Caco-2 (cell line): ENCODE measurements at regions of chr9 and their contacts with region 1.

Region 1: DNA sequence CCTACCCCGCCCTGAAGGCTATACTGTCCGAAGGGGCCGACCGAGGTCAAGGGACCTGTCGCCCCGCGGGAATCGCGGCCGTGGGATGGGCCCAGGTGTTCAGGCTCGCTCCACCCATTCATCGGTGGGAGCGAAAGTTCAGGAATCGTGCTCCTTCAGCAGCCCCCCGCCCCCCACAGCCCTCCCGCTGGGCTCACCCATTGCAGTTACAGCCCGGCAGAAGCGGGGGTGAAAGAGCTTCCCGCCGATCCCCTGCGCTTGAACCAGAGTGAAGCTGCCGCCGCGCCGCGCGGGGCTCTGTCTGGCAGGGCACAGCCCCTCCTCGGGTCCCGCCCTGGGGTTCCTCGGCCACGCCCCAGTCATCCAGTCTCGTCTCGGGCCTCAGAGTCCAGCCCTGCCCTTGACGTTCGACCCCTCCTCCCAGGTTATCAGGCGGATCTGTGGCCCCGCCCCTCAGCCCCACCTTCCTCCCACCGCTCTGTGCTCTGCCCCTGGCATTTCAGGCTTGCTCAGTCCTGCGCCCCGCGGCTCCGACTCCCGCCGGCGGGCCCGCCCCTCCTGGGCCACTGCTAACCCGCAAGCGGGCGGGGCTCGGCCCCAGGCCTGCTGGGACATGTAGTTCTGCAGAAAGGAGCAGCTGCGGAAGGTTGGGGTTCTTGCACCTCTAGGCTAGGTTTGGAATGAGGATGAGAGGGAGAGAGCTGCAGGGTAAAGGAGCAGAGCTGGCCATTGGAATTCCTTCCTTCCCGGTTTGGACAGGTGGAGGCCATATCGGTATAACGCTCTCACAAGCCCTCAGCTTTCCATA is at the start of gene MYORG:
- DNase-seq: peak; percentile 99
- H3K4me3 ChIP-seq: peak within 1 kb of the TSS; percentile 89
- H3K4me3 Mint-ChIP-seq: peak within 1 kb of the TSS; percentile 88
- H3K27ac Mint-ChIP-seq: peak within 1 kb of the TSS; percentile 49
- H3K4me1 ChIP-seq: peaks cover 29% of the 10 kb centered on the region
- H3K4me1 Mint-ChIP-seq: peaks cover 26% of the 10 kb centered on the region
- H3K27me3 ChIP-seq: no peaks in the 10 kb centered on the region
- H3K27me3 Mint-ChIP-seq: no peaks in the 10 kb centered on the region
- CTCF ChIP-seq: no peak
- total RNA-seq, gene MYORG: 33.4 and 37.3 TPM in 2 replicates

Region 2: GRCh38 chr9:34126207-34127034 is 250.4 kb before region 1 on chr9 and contains the start of gene DCAF12:
- CTCF ChIA-PET with region 1: no interaction called
- POLR2A ChIA-PET with region 1: no interaction called
- intact Hi-C with region 1: loop called (anchors 1 kb)
- DNase-seq: peak; percentile 89 to 92
- H3K4me3 ChIP-seq: peak within 1 kb of the TSS; percentile 62
- H3K4me3 Mint-ChIP-seq: peak within 1 kb of the TSS; percentile 86
- H3K27ac Mint-ChIP-seq: peak within 1 kb of the TSS; percentile 90
- H3K4me1 ChIP-seq: peaks cover 21% of the 10 kb centered on the region
- H3K4me1 Mint-ChIP-seq: peaks cover 27% of the 10 kb centered on the region
- H3K27me3 ChIP-seq: no peaks in the 10 kb centered on the region
- H3K27me3 Mint-ChIP-seq: no peaks in the 10 kb centered on the region
- CTCF ChIP-seq: no peak
- total RNA-seq, gene DCAF12: 33.0 and 34.1 TPM in 2 replicates

Region 3: GRCh38 chr9:34328987-34329832 is 47.6 kb before region 1 on chr9 and contains the starts of genes KIF24 and NUDT2:
- CTCF ChIA-PET with region 1: interaction called, 105 read pairs
- POLR2A ChIA-PET with region 1: interaction called, 5 read pairs
- intact Hi-C with region 1: loop called (anchors 1 kb)
- DNase-seq: peak; percentile 98 to 99
- H3K4me3 ChIP-seq: peak within 1 kb of the TSS; percentile 96
- H3K4me3 Mint-ChIP-seq: peak within 1 kb of the TSS; percentile 83
- H3K27ac Mint-ChIP-seq: peak within 1 kb of the TSS; percentile 94
- H3K4me1 ChIP-seq: no peaks in the 10 kb centered on the region
- H3K4me1 Mint-ChIP-seq: peaks cover 13% of the 10 kb centered on the region
- H3K27me3 ChIP-seq: no peaks in the 10 kb centered on the region
- H3K27me3 Mint-ChIP-seq: no peaks in the 10 kb centered on the region
- CTCF ChIP-seq: no peak
- total RNA-seq, gene KIF24: 3.9 and 4.4 TPM in 2 replicates
- total RNA-seq, gene NUDT2: 14.4 and 15.0 TPM in 2 replicates

Region 4: GRCh38 chr9:34403554-34404380 is 27.0 kb after region 1 on chr9:
- CTCF ChIA-PET with region 1: interaction called, 17 read pairs
- POLR2A ChIA-PET with region 1: no interaction called
- intact Hi-C with region 1: no loop called
- DNase-seq: peak; percentile 78 to 83
- H3K4me3 ChIP-seq: no peak overlapping the region
- H3K4me3 Mint-ChIP-seq: no peak overlapping the region
- H3K27ac Mint-ChIP-seq: no peak overlapping the region
- H3K4me1 ChIP-seq: no peaks in the 10 kb centered on the region
- H3K4me1 Mint-ChIP-seq: no peaks in the 10 kb centered on the region
- H3K27me3 ChIP-seq: no peaks in the 10 kb centered on the region
- H3K27me3 Mint-ChIP-seq: no peaks in the 10 kb centered on the region
- CTCF ChIP-seq: peak; percentile 96

Region 5: DNA sequence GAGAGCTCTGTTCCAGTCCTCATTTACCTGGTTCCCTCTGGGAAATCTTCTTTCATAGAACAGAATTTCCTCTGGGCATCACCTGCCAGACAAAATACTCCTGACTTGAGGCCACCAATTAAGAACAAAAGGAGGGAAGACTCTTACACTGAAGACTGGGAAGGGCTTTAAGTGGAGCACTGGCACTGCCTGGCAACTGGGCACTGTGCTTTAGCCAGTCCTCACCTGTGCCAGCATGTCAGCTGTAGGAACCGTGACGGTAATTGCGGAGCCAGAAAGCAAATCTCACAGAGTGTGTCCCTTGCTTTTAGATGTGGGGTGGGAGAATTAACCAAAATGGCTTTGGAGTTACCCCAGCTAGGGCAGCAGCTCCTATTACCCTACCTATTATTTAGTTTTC is 40.9 kb after region 1 on chr9:
- CTCF ChIA-PET with region 1: no interaction called
- POLR2A ChIA-PET with region 1: no interaction called
- intact Hi-C with region 1: no loop called
- DNase-seq: no peak
- H3K4me3 ChIP-seq: no peak overlapping the region
- H3K4me3 Mint-ChIP-seq: no peak overlapping the region
- H3K27ac Mint-ChIP-seq: no peak overlapping the region
- H3K4me1 ChIP-seq: no peaks in the 10 kb centered on the region
- H3K4me1 Mint-ChIP-seq: no peaks in the 10 kb centered on the region
- H3K27me3 ChIP-seq: no peaks in the 10 kb centered on the region
- H3K27me3 Mint-ChIP-seq: no peaks in the 10 kb centered on the region
- CTCF ChIP-seq: no peak

Region 6: DNA sequence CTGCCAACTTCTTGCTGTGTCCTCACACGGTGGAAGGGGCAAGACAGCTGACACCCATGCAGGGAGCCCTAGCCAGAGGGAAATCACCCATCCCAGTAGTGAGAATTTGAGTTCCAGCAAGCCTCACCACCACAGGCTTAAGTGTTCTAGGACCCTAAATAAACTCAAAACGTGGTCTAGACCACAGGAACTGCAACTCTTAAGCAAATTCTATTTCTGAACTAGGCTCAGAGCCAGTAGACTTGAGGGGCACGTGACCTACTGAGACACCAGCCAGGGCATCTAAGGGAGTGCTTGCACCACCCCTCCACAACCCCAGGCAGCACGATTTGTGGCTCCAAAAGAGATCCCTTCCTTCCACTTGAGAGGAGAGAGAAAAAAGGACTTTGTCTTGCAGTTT is 485.2 kb after region 1 on chr9:
- CTCF ChIA-PET with region 1: no interaction called
- POLR2A ChIA-PET with region 1: no interaction called
- intact Hi-C with region 1: no loop called
- DNase-seq: no peak
- H3K4me3 ChIP-seq: no peak overlapping the region
- H3K4me3 Mint-ChIP-seq: no peak overlapping the region
- H3K27ac Mint-ChIP-seq: no peak overlapping the region
- H3K4me1 ChIP-seq: no peaks in the 10 kb centered on the region
- H3K4me1 Mint-ChIP-seq: no peaks in the 10 kb centered on the region
- H3K27me3 ChIP-seq: no peaks in the 10 kb centered on the region; the same call in 1 of the 2 replicates
- H3K27me3 Mint-ChIP-seq: peaks cover 2% of the 10 kb centered on the region
- CTCF ChIP-seq: no peak